AG04449 (cell line): ENCODE measurements at regions of chr2 and their contacts with region 1.

Region 1: GRCh38 chr2:119753041-119753929 is 6.4 kb upstream of the PTPN4 start:
- DNase-seq: no peak
- H3K4me3 ChIP-seq: no peak overlapping the region
- CTCF ChIP-seq: peak; percentile 65

Region 2: DNA sequence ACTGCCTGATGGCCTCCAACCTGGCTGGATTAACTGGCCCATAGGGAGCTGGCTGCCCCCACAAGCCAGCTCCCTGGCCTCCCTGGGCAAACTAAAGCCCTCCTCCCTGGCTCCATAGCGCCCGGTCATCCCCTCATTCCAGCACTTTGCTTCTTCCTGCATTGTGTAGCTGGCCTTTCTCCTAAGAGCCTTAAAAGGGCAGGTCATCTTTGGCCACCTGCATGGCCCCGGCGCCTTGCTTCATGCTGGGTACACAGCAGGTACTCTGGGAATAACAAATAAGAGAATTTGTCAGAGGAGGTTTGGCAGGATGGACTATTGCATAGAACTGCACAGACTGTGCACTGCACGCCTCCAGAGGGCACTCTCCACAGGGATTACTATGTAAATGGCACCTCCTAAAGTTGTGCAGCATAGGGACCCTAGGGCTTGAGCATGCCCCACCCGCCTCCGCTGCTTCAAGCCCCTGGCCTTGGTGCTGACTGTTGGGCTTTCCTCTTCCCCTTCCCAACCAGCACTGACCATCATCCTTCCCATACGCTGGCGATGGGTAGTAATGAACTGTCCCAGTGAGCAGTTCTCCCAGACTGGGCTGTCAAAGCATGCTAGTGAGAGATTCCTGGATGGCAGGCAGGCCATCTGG is 518.8 kb before region 1 on chr2:
- CTCF ChIA-PET with region 1: no interaction called
- POLR2A ChIA-PET with region 1: no interaction called
- DNase-seq: no peak
- H3K4me3 ChIP-seq: no peak overlapping the region
- CTCF ChIP-seq: peak; percentile 44

Region 3: GRCh38 chr2:119739580-119740255 is 13.6 kb before region 1 on chr2:
- CTCF ChIA-PET with region 1: interaction called, 14 read pairs
- POLR2A ChIA-PET with region 1: no interaction called
- DNase-seq: no peak
- H3K4me3 ChIP-seq: no peak overlapping the region
- CTCF ChIP-seq: no peak

Region 4: DNA sequence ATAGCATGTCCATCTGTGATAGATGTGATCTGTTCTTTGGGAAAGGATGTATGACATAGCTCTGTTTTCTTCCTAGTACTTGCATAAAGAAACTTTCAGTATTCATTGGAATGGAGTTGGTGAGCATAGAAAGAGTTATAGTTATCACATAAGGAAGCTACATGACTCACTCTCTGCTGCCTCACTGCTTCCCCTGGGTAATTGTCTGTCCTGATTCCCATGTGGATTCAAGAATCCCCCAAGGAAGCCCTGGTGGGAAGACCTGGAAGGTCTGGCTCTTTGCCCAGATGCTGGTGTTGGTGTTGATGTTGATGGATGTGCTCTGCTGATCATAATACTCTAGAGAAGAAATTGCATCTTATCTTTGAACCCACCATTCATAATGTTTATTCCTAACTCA is 67.0 kb after region 1 on chr2:
- CTCF ChIA-PET with region 1: interaction called, 30 read pairs
- POLR2A ChIA-PET with region 1: no interaction called
- DNase-seq: peak; percentile 74
- H3K4me3 ChIP-seq: no peak overlapping the region
- CTCF ChIP-seq: no peak

Region 5: GRCh38 chr2:121363632-121364420 is 1610.5 kb after region 1 on chr2:
- CTCF ChIA-PET with region 1: no interaction called
- POLR2A ChIA-PET with region 1: no interaction called
- DNase-seq: no peak
- H3K4me3 ChIP-seq: no peak overlapping the region
- CTCF ChIP-seq: no peak